Left cardiac atrium (tissue), 4 donors: ENCODE measurements at regions of chr17 and their contacts with region 1.

Region 1: GRCh38 chr17:81083125-81083765 is 48.3 kb downstream of the BAIAP2 start:
- DNase-seq: peak; percentile 75
- ATAC-seq: peak in 1 of 2 donors; percentile 31

Region 2: DNA sequence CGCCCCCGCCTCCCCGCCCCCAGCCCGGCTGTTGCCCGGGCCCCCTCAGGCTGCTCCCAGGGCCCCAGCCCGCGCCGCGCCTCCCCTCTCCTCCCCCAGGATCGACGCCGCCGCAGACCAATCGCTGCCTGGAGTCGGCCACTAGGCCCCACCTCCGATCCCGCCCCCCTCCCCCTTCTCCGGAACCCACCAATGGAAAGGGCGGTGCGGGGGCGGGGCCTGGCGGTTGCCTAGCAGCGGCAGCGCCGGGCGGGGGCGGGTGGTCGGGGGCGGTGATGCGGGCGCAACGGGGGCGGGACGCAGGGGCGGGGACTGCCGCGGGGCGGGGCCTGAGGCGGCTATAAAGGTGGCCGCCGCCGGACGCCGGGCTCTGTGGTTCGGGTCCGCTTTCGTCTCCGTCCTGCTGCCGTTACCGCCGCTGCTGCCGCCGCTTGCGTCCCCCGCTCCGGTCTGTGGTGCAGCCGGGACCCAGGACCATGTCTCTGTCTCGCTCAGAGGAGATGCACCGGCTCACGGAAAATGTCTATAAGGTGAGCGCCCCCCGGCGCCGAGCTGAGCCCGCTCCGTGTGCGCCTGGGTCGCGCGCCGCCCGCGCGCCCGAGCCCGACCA is 48.4 kb before region 1 on chr17 and contains the start of gene BAIAP2:
- intact Hi-C with region 1: loop called in 1 of 2 experiments (anchors 5 kb)
- DNase-seq: peak; percentile 98
- ATAC-seq: peak; percentile 76 to 83
- total RNA-seq, gene BAIAP2: 32.8 to 38.0 TPM